OCI-LY7 (cell line): ENCODE measurements at regions of chr22 and their contacts with region 1.

Region 1: DNA sequence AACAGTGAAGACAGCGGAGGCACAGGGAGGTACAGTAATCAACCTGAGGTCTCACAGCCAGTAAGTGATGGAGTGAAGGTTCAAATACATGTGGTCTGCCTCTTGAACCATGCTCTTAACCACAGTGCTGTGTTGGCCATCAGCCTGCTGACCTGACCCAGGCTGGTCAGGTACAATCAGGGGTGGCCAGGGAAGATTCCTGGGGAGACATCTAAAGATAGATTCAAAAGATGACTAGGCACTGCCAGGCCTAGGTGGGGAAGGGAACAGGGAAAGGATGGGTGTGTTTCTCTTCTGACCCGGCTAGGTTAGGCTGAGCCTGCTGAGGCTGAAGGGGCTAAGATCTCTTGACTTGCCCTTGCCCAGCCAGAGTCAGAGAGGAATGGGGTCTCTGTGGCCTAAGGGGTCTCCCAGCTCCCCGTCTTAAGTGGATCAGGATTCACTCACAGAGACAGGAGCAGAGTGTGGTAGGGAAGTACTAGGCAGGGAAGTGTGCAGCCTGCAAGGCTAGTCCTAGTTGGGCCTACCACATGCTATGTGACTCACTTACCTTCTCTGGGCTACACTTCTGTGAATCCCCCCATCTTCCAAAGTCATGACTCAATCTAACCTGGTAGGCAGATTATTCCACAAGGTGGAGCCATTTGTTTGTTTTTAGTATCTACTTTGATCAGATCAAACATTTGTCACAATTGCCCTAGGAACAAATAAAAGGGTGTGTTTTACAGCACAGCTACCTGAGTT is 10.4 kb upstream of the SREBF2 start:
- DNase-seq: peak; percentile 84
- H3K4me3 ChIP-seq: no peak overlapping the region
- H3K27ac ChIP-seq: no peak overlapping the region
- H3K4me1 ChIP-seq: no peaks in the 10 kb centered on the region
- CTCF ChIP-seq: peak; percentile 87

Region 2: GRCh38 chr22:41808400-41808799 is 14.1 kb before region 1 on chr22:
- CTCF ChIA-PET with region 1: no interaction called
- POLR2A ChIA-PET with region 1: no interaction called
- intact Hi-C with region 1: no loop called
- DNase-seq: no peak
- H3K4me3 ChIP-seq: no peak overlapping the region
- H3K27ac ChIP-seq: no peak overlapping the region
- H3K4me1 ChIP-seq: peaks cover 20% of the 10 kb centered on the region
- CTCF ChIP-seq: no peak

Region 3: DNA sequence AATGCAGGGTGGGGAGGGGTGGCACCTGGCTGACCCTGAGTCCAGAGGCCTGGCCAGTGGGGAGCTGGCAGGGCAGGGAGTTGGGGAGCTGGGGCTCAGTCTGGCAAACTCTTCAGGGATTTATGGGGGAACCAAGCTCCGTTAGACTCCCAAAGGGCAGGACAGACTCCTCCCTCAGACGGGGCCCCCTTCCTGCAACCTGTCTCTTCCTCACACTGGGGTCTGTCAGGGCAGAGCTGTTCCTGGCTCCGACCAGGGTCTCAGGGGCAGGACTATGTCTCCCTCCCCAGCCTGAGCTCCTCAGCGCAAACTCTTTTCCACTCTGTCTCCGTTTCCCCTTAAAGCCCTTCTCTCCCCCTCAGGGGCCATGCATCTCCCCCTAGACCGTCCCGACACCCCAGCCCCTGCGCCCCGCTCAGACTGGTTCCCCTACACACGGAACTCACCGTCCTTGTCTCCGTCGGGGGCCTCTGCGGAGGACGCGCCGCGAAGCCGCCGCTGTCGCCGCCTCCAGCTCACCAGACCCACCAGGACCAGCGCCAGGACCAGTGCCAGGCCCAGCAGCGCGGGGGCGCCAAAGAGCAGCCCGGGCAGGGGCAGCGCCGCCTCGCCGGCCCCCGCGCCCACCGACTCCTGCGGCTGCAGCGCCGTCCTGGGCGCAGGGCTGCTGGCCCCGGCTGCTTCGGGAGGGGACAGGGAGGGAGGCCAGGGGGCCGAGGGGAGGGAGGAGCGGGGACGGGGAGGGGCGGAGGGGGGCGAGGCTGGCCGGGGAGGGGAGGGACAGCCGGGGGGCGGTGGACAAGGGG is 103.4 kb after region 1 on chr22:
- CTCF ChIA-PET with region 1: interaction called, 4 read pairs
- POLR2A ChIA-PET with region 1: no interaction called
- intact Hi-C with region 1: loop called (anchors 5 kb)
- DNase-seq: peak; percentile 78
- H3K4me3 ChIP-seq: peak overlapping the region; percentile 68
- H3K27ac ChIP-seq: peak overlapping the region; percentile 76
- H3K4me1 ChIP-seq: peaks cover 95% of the 10 kb centered on the region
- CTCF ChIP-seq: peak; percentile 82

Region 4: DNA sequence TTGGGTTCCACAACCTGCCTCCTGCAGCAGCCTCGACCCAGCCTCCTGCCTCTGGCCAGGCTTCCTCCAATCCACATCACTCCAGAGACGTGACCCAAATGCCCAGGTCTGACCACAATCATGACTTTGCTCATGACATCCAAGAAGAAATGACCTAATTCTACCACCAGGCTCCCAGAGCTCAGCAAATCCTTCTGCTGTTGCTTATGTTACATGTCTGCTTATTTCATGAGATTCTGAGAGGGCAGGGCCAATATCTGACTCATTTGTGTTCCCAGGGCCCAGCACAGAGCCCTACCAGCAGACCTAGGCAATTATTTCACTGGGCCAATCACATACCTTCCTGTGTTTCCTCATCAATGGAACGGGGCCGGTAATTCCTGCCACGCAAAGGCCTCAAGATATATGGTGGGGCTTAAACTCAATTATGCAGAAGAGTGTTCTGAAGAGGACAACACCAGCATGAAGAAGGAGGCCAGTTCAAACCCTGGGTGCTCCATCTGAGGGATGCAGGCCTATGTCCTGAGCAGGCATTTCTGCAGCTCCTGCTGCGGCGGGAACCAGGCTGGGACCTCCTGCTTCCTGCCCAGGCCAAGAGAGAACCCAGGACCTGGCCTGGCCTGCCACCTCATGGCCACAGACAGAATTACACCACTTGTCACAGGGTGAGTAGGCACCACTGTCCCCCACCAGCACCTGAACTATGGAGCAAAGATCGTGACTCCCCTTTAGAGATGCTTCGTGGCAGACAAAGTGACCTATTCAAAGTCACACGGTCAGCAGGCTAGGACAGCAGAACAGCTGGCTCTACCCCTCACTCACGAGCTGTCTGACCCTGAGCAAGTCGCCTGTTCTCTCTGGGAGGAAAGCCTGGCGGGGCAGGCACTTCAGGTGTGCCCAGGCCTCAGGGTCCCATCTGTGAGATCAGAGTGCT is 118.6 kb after region 1 on chr22:
- CTCF ChIA-PET with region 1: no interaction called
- POLR2A ChIA-PET with region 1: interaction called, 3 read pairs
- intact Hi-C with region 1: loop called (anchors 2 kb)
- DNase-seq: peak; percentile 85
- H3K4me3 ChIP-seq: peak overlapping the region; percentile 52
- H3K27ac ChIP-seq: peak overlapping the region; percentile 91
- H3K4me1 ChIP-seq: peaks cover 83% of the 10 kb centered on the region
- CTCF ChIP-seq: peak; percentile 92

Region 5: GRCh38 chr22:41957941-41958556 is 135.6 kb after region 1 on chr22:
- CTCF ChIA-PET with region 1: no interaction called
- POLR2A ChIA-PET with region 1: no interaction called
- intact Hi-C with region 1: loop called (anchors 2 kb)
- DNase-seq: no peak
- H3K4me3 ChIP-seq: no peak overlapping the region
- H3K27ac ChIP-seq: no peak overlapping the region
- H3K4me1 ChIP-seq: peaks cover 19% of the 10 kb centered on the region
- CTCF ChIP-seq: no peak